Activated CD4-positive, alpha-beta T cell treated with anti-CD3 and anti-CD28 coated beads for 36 hours (primary cell): ENCODE measurements at regions of chr9 and their contacts with region 1.

Region 1: DNA sequence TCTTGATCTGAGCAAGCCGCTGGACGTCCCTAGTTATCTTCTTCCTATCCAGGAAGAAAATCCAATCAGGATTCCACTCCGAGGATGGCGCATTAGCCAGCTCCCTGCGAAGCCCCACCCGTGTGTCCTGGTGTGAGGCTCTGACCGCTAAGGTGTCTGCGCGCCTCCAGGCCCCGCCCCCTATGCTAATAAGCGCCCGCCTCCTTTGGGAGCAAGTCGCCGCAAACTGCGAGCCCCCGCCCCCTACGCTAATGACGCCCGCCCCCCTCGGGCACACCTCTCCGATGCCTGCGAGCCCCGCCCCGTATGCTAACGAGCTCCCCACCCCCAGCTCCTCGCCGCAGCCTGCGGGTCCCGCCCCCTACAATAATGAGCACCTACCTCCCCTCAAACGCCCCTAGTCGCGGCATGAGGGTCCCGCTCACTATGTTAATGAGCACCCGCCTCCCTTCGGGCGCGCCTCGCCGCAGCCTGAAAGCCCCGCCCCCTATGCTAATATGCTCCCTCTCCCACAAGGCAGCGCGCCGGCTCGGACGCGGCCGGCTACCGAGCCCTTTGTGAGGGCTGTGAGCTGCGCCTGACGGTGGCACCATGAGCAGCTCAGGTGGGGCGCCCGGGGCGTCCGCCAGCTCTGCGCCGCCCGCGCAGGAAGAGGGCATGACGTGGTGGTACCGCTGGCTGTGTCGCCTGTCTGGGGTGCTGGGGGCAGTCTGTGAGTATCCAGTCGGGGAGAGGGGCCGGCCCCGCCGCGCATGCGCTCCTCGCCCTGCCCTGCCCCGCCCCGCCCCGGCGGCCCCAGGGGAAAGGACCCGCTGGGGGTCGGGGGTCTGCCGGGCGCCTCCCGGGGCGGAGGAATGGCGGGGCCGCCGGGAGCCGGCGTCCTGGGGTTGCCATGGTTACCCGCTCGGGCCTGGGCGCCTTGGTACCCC is at the start of gene CACFD1:
- DNase-seq: peak; percentile 96
- ATAC-seq: peak; percentile 88
- H3K4me3 Mint-ChIP-seq: peak within 1 kb of the TSS; percentile 74
- H3K27ac Mint-ChIP-seq: peak within 1 kb of the TSS; percentile 42
- H3K4me1 Mint-ChIP-seq: no peaks in the 10 kb centered on the region
- H3K27me3 Mint-ChIP-seq: no peaks in the 10 kb centered on the region
- total RNA-seq, gene CACFD1: 0.87 to 0.90 TPM

Region 2: DNA sequence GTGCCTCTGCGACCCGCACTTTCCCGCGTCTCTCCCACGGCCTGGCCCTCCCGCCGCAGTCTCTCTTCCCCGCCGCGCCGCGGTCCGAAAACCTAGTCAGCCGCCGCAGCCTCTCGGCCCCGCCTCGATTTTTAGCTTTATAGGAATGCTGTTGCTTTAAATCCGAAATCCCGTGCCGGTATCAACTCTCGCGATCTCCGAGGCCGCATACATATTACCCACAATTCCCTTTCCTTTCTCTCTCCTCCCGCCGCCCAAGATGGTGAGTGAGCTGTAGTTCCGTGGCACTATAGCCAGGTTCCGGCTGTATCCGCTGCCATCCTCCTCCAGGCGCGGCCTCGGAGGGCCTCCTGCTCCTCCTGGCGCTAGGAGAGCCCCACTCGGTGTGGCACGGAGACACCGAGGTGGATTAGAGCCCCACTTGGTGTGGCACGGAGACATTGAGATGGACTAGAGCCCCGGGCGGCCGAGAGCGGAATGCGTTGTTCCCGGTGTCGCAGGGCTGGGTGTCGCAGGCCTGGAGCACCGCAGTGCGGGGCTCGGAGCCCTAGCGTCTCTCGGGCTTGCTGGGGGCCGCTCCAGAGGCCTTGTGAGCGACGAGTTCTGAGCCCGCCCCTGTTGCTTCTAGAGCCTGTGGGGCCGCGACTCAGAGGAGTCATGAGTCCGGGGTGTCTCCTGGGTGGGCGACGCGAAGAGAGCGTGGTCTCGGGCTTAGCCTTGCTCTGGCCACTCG is 111.6 kb before region 1 on chr9 and contains the starts of genes MED22 and RPL7A:
- CTCF ChIA-PET with region 1: no interaction called
- POLR2A ChIA-PET with region 1: no interaction called
- intact Hi-C with region 1: loop called in 1 of 2 experiments (anchors 1 kb)
- DNase-seq: peak; percentile 96
- ATAC-seq: peak; percentile 83
- H3K4me3 Mint-ChIP-seq: peak within 1 kb of the TSS; percentile 97
- H3K27ac Mint-ChIP-seq: peak within 1 kb of the TSS; percentile 97
- H3K4me1 Mint-ChIP-seq: peaks cover 36% of the 10 kb centered on the region
- H3K27me3 Mint-ChIP-seq: no peaks in the 10 kb centered on the region
- total RNA-seq, gene MED22: 22.9 to 26.4 TPM
- total RNA-seq, gene RPL7A: 3,179 to 3,246 TPM

Region 3: DNA sequence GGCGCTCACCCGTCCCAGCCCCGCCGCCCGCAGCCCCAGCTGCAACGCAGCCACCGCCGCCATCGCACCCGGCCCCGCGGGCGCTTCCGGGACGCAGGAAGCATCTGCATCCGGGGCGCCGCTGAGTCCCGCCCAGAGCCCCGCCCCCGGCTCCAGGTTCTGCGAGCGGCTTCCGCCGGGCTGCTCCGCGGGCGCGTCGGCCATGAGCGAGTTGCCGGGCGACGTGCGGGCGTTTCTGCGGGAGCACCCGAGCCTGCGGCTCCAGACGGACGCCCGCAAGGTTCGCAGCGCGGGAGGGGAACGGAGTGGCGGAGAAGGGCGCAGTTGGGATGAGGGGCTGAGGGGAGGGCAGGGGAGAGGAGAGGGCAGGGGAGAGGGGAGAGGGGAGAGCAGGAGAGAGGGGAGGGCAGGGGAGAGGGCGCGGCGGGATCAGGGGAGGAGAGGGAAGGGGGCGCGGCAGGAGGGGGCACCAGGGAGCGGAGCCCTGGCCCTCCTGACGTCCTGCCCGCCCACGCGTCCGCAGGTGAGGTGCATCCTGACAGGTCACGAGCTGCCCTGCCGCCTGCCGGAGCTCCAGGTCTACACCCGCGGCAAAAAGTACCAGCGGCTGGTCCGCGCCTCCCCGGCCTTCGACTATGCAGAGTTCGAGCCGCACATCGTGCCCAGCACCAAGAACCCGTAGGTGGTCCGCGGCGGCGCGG is 103.2 kb before region 1 on chr9 and contains the starts of genes SURF1 and SURF2:
- CTCF ChIA-PET with region 1: no interaction called
- POLR2A ChIA-PET with region 1: no interaction called
- intact Hi-C with region 1: loop called in 1 of 2 experiments (anchors 1 kb)
- DNase-seq: peak; percentile 96
- ATAC-seq: peak; percentile 84
- H3K4me3 Mint-ChIP-seq: peak within 1 kb of the TSS; percentile 91
- H3K27ac Mint-ChIP-seq: peak within 1 kb of the TSS; percentile 85
- H3K4me1 Mint-ChIP-seq: peaks cover 52% of the 10 kb centered on the region
- H3K27me3 Mint-ChIP-seq: no peaks in the 10 kb centered on the region
- total RNA-seq, gene SURF1: 17.4 to 29.1 TPM
- total RNA-seq, gene SURF2: 17.3 to 21.8 TPM

Region 4: DNA sequence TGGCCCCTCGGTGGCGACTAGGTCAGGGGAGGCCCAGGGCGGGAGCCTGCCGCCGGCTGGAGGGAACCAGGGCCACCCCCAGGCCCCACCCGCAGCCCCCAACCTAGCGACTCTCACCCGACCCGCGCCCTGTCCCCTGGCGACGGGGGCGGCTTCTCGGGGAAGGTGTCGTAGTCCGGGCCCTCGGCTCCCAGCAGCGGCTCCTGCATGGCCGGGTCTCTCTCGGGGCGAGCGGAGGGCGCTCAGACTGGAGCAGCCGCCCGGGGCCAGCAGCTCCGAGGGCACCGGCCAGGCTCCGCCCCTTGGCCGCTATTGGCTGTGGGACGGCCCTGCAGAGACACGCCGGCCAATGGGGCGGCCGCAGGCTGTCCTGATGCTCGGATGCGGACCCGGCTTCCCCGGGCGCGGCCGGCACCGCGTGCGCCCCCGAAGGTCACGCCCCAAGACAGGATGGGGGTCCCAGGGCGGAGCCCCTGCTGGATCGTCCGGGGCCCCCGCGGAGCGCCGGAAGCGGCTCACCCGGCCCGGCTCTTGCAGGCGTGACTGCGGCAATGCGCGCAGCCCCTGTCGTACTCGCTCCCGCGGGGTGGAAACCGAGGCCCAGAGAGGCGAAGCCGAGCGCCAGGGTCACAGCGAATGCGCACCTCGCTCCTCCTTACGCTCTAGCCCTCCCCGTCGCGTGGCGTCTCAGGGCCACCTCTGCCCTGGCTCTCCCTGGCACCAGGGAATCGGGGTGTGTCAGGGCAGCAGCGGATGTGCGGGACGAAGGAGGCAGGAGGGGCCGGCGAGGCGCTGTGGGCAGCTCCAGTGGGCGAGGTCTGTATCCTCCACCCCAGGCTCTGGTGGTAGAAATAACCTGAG is 19.3 kb after region 1 on chr9 and contains the start of gene SLC2A6:
- CTCF ChIA-PET with region 1: interaction called, 3 read pairs
- POLR2A ChIA-PET with region 1: interaction called, 3 read pairs
- intact Hi-C with region 1: loop called in 1 of 2 experiments (anchors 1 kb)
- DNase-seq: peak; percentile 89
- ATAC-seq: peak; percentile 100
- H3K4me3 Mint-ChIP-seq: peak within 1 kb of the TSS; percentile 67
- H3K27ac Mint-ChIP-seq: no peak within 1 kb of the TSS
- H3K4me1 Mint-ChIP-seq: peaks cover 6% of the 10 kb centered on the region
- H3K27me3 Mint-ChIP-seq: no peaks in the 10 kb centered on the region
- total RNA-seq, gene SLC2A6: 1.6 to 1.9 TPM